Heart left ventricle (tissue), 16 donors: ENCODE measurements at regions of chr11 and their contacts with region 1.

Region 1: GRCh38 chr11:83819933-83820549 is 533.9 kb upstream of the CCDC90B start:
- DNase-seq: peak in 1 of 5 donors; percentile 16
- ATAC-seq: peak in 2 of 4 donors; percentile 48 to 63
- H3K4me3 ChIP-seq: no peak overlapping the region
- H3K27ac ChIP-seq: no peak overlapping the region
- H3K4me1 ChIP-seq: no peaks in the 10 kb centered on the region
- H3K27me3 ChIP-seq: no peaks in the 10 kb centered on the region
- CTCF ChIP-seq: peak; percentile 15 to 71 (median 60)
- POLR2A ChIP-seq: no peak

Region 2: GRCh38 chr11:82900277-82901164 is 919.5 kb before region 1 on chr11 and contains the start of gene PRCP:
- intact Hi-C with region 1: loop called in 4 of 10 experiments (anchors 5 to 10 kb)
- DNase-seq: peak; percentile 94 to 97 (median 95)
- ATAC-seq: peak; percentile 94 to 96 (median 96)
- H3K4me3 ChIP-seq: peak within 1 kb of the TSS; percentile 55 to 93 (median 74)
- H3K27ac ChIP-seq: peak within 1 kb of the TSS; percentile 31 to 93 (median 86)
- H3K4me1 ChIP-seq: peaks cover 0 to 53% (median 23%) of the 10 kb centered on the region in 12 donors
- H3K27me3 ChIP-seq: no peaks in the 10 kb centered on the region
- CTCF ChIP-seq: peak in 1 of 12 donors; percentile 32
- POLR2A ChIP-seq: peak in 1 of 2 donors; percentile 92
- total RNA-seq, gene PRCP: 29.7 to 99.4 (median 44.0) TPM

Region 3: DNA sequence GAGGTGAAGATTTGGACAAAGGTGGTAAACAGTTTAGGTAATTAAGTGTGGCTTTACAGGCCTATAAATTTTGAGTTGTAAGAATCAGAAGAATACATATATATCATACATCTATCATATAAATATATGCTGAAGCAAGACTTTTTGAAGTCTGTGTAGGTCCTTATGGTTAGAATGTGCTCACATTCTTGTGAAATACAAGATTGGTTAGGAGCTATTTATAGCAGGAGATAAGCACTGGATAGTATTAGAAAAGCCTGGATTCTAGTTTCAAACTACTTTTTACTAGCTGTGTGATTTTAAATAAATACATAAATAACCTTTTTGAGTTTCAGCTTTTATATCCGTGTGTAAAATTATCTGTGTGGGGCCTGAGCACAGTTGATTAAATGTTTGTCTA is 584.2 kb before region 1 on chr11:
- intact Hi-C with region 1: loop called in 4 of 10 experiments (anchors 5 to 10 kb)
- DNase-seq: no peak
- ATAC-seq: no peak
- H3K4me3 ChIP-seq: no peak overlapping the region
- H3K27ac ChIP-seq: no peak overlapping the region
- H3K4me1 ChIP-seq: peaks cover 0 to 4% (median 0%) of the 10 kb centered on the region in 12 donors
- H3K27me3 ChIP-seq: no peaks in the 10 kb centered on the region
- CTCF ChIP-seq: no peak
- POLR2A ChIP-seq: no peak

Region 4: GRCh38 chr11:83285771-83286528 is 534.1 kb before region 1 on chr11 and contains the start of gene CCDC90B:
- intact Hi-C with region 1: loop called in 6 of 10 experiments (anchors 5 kb)
- DNase-seq: peak; percentile 95 to 98 (median 96)
- ATAC-seq: peak; percentile 98 to 99 (median 98)
- H3K4me3 ChIP-seq: peak within 1 kb of the TSS; percentile 29 to 99 (median 83)
- H3K27ac ChIP-seq: peak within 1 kb of the TSS; percentile 90 to 99 (median 98)
- H3K4me1 ChIP-seq: peaks cover 0 to 45% (median 26%) of the 10 kb centered on the region in 12 donors
- H3K27me3 ChIP-seq: no peaks in the 10 kb centered on the region
- CTCF ChIP-seq: peak in 3 of 12 donors; percentile 14 to 46 (median 29)
- POLR2A ChIP-seq: peak in 1 of 2 donors; percentile 84
- total RNA-seq, gene CCDC90B: 18.0 to 31.7 (median 26.7) TPM

Region 5: DNA sequence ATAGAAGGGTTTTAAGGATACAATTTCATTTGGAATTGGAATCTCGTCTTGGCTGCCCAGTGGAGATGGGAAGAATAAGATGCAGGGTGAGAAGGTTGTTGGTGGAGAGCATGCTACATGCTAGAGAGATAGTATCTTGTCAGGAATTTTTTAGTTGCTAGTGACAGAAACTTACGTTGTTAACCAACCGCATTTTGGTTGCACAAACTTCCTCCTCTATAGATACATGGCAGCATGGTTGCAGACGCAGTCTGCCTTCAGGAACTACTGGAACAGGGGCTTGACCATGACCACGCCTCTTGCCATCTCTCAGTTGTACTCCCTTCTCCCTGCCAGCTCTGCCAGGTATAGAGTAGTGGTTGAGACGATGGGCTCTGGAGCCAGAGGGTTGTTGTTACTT is 520.4 kb before region 1 on chr11:
- intact Hi-C with region 1: loop called in 8 of 10 experiments (anchors 5 kb)
- DNase-seq: no peak
- ATAC-seq: no peak
- H3K4me3 ChIP-seq: no peak overlapping the region
- H3K27ac ChIP-seq: no peak overlapping the region
- H3K4me1 ChIP-seq: peaks cover 0 to 8% (median 0%) of the 10 kb centered on the region in 12 donors
- H3K27me3 ChIP-seq: no peaks in the 10 kb centered on the region
- CTCF ChIP-seq: no peak
- POLR2A ChIP-seq: no peak

Region 6: GRCh38 chr11:83438438-83438837 is 381.6 kb before region 1 on chr11:
- intact Hi-C with region 1: no loop called
- DNase-seq: no peak
- ATAC-seq: no peak
- H3K4me3 ChIP-seq: no peak overlapping the region
- H3K27ac ChIP-seq: no peak overlapping the region
- H3K4me1 ChIP-seq: no peaks in the 10 kb centered on the region
- H3K27me3 ChIP-seq: no peaks in the 10 kb centered on the region
- CTCF ChIP-seq: no peak
- POLR2A ChIP-seq: no peak

Region 7: GRCh38 chr11:83793332-83793731 is 26.7 kb before region 1 on chr11:
- intact Hi-C with region 1: no loop called
- DNase-seq: no peak
- ATAC-seq: no peak
- H3K4me3 ChIP-seq: no peak overlapping the region
- H3K27ac ChIP-seq: no peak overlapping the region
- H3K4me1 ChIP-seq: no peaks in the 10 kb centered on the region
- H3K27me3 ChIP-seq: no peaks in the 10 kb centered on the region
- CTCF ChIP-seq: no peak
- POLR2A ChIP-seq: no peak

Region 8: GRCh38 chr11:84036664-84037194 is 216.7 kb after region 1 on chr11:
- intact Hi-C with region 1: no loop called
- DNase-seq: no peak
- ATAC-seq: no peak
- H3K4me3 ChIP-seq: no peak overlapping the region
- H3K27ac ChIP-seq: no peak overlapping the region
- H3K4me1 ChIP-seq: no peaks in the 10 kb centered on the region
- H3K27me3 ChIP-seq: no peaks in the 10 kb centered on the region
- CTCF ChIP-seq: no peak
- POLR2A ChIP-seq: no peak